ENCODE measurements at regions of chr18 and their contacts with region 1.

Region 1: GRCh38 chr18:32730620-32731091 is 42.2 kb downstream of the KLHL14 start:
- DNase-seq: no peak
- ATAC-seq: no peak
- H3K4me3 ChIP-seq: peak overlapping the region in 6 of 10 donors; percentile 19 to 45 (median 31)
- H3K27ac ChIP-seq: peak overlapping the region in 1 of 10 donors; percentile 37
- H3K4me1 ChIP-seq: no peaks in the 10 kb centered on the region
- H3K27me3 ChIP-seq: no peaks in the 10 kb centered on the region
- CTCF ChIP-seq: no peak

Region 2: DNA sequence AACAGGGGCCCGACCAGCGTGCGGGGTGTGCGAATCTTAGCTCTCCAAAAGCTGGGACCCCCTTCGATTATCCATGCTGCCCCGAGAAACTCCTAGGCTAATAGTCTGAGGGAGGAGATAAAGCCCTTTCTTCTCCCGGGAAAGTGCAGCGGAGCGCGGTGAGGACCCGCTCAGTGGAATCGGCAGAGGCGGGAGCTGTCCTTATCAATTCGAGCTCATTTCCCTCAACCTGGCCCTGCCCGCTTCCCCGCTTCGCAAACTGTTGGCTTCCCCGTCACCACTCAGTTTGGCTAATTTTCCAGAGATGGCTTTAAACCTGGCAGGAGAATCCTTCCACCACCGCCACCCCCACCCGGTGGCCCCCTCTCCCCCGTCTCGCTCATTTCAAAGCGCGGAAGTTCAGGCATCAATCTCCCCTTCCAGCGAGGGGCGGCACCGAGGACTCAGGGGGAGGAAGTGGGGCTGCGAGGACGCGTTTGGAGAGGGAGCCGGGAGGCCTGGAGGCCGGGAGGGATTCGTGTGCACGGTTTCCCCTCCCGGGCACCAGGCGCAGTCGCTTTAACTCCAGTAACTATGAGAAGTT is 40.6 kb after region 1 on chr18:
- intact Hi-C with region 1: loop called in 1 of 10 experiments (anchors 5 kb)
- DNase-seq: no peak
- ATAC-seq: peak in 4 of 8 donors; percentile 12 to 54 (median 30)
- H3K4me3 ChIP-seq: peak overlapping the region; percentile 8 to 59 (median 46)
- H3K27ac ChIP-seq: peak overlapping the region in 2 of 10 donors; percentile 10 to 16
- H3K4me1 ChIP-seq: peaks cover 0 to 26% (median 19%) of the 10 kb centered on the region in 9 donors
- H3K27me3 ChIP-seq: peaks cover 22 to 68% (median 45%) of the 10 kb centered on the region in 7 donors
- CTCF ChIP-seq: no peak

Region 3: GRCh38 chr18:32831781-32832180 is 101.1 kb after region 1 on chr18:
- intact Hi-C with region 1: no loop called
- DNase-seq: no peak
- ATAC-seq: no peak
- H3K4me3 ChIP-seq: no peak overlapping the region
- H3K27ac ChIP-seq: no peak overlapping the region
- H3K4me1 ChIP-seq: no peaks in the 10 kb centered on the region
- H3K27me3 ChIP-seq: peaks cover 0 to 4% (median 0%) of the 10 kb centered on the region in 7 donors
- CTCF ChIP-seq: no peak

Measured in heart right ventricle (tissue), 16 donors.